Posterior vena cava (tissue), 2 donors: ENCODE measurements at regions of chr11 and their contacts with region 1.

Region 1: DNA sequence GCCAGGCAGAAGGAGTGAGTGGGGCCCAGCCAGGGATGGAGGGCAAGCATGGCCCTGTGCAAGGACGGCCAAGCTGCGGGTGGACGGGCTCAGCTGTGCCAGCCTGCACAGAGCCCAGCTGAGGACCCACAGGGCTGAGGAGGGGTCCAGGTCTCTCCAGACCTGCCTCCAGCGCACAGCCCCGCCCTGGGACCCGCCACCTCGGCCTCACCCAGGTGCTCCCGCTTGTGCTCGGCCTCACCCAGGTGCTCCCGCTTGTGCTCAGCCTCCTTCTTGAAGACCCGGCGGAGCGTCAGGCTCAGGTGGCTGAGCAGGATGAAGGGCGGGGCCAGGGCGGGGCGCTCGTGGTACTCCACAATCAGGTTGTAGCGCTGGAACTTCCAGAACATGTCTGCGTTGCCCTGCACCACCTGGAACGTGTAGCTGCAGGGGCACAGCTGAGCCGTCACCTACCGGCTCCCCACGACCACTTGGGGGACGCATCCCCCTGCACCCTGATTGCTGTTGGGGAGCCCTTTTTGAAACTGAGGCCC is 6.4 kb downstream of the TSSC4 start:
- DNase-seq: no peak

Region 2: DNA sequence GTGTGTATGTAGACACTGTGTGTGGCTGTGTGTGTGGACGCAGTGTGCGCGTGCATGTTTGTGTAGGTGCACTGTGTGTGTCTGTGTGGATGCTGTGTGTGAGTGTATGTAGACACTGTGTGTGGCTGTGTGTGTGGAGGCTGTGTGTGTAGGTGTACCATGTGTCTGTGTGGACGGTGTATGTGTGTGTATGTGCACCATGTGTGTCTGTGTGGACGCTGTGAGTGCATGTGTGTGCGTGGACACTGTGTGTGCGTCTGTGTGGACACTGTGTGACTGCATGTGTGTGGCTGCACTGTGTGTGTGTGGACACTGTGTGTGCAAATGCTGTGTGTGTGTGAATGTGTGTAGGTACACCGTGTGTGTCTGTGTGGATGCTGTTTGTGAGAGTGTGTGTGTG is 27.1 kb after region 1 on chr11:
- intact Hi-C with region 1: loop called in 1 of 2 experiments (anchors 1 kb)
- DNase-seq: peak; percentile 62